Activated naive CD4-positive, alpha-beta T cell treated with anti-CD3 and anti-CD28 coated beads for 36 hours (primary cell): ENCODE measurements at regions of chr4 and their contacts with region 1.

Region 1: GRCh38 chr4:185471235-185472102 is at the start of gene CCDC110:
- DNase-seq: peak; percentile 93
- H3K4me3 Mint-ChIP-seq: peak within 1 kb of the TSS; percentile 84
- H3K27ac Mint-ChIP-seq: peak within 1 kb of the TSS; percentile 26
- H3K4me1 Mint-ChIP-seq: peaks cover 2% of the 10 kb centered on the region
- H3K27me3 Mint-ChIP-seq: peaks cover 4% of the 10 kb centered on the region
- total RNA-seq, gene CCDC110: 0.25 to 0.57 TPM

Region 2: DNA sequence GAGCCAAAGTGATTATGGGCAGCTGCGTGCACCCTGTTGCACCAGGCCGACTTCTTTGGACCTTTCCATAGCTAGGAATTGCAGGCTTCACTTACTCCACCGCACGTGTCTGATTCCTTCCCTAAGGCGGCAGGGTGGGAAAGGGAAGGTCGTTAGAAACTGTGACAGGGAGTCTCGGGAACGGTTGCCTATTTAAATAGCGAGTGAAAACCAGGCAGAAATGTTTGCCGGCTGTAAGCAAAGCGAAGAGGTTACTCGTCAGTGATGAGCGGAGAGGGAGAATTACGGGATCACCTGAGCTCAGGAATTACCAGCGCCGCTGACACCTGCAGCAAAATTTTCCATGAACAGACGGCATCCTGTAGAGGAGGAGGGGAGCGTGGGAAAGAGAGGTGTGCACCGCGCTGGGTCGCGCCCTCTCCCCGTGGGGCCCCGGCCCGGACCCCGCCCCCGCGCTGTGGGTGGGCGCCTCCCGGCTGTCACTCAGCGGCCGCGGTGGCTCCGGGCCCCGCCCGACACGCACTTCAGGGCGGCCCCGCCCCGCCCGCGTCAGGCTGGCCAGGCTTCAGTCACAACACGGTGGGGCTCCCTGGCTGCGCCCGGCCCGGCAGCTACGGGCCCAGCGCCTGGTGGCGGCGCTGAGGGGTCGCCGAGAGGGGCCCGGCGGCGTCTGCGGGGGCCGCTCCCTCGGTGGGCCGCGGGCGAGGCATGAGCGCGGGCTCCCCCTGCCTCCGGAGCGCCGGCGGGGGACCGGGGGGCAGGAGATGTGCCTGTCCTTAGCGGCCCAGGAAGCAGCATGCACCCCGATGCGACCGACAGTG is 262.2 kb before region 1 on chr4 and contains the start of gene SNX25:
- CTCF ChIA-PET with region 1: no interaction called
- intact Hi-C with region 1: loop called (anchors 1 kb)
- DNase-seq: peak; percentile 84
- H3K4me3 Mint-ChIP-seq: peak within 1 kb of the TSS; percentile 84
- H3K27ac Mint-ChIP-seq: peak within 1 kb of the TSS; percentile 71
- H3K4me1 Mint-ChIP-seq: peaks cover 28% of the 10 kb centered on the region
- H3K27me3 Mint-ChIP-seq: no peaks in the 10 kb centered on the region
- total RNA-seq, gene SNX25: 11.0 to 14.6 TPM

Region 3: GRCh38 chr4:185405296-185405999 is 66.0 kb before region 1 on chr4:
- CTCF ChIA-PET with region 1: no interaction called
- intact Hi-C with region 1: no loop called
- DNase-seq: no peak
- H3K4me3 Mint-ChIP-seq: no peak overlapping the region
- H3K27ac Mint-ChIP-seq: no peak overlapping the region
- H3K4me1 Mint-ChIP-seq: peaks cover 3% of the 10 kb centered on the region
- H3K27me3 Mint-ChIP-seq: no peaks in the 10 kb centered on the region

Region 4: DNA sequence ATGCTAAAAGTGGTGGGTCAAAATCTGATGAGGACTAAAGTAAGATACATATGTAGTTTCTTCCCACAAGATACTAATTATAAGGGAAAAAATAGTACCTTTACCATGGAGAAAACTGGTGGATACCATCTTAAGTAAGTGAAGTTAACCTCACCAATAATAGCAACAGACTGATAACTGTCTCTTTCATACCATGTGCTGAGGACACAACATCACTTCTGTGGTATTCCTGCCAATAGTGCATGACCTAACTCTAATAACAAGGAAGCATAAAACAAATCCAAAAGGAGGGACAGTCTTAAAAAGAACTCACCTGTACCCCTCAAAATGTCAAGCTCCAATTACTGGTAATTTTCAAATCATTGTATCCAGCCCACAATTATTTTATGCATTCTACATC is 54.5 kb before region 1 on chr4:
- CTCF ChIA-PET with region 1: no interaction called
- intact Hi-C with region 1: no loop called
- DNase-seq: no peak
- H3K4me3 Mint-ChIP-seq: no peak overlapping the region
- H3K27ac Mint-ChIP-seq: no peak overlapping the region
- H3K4me1 Mint-ChIP-seq: peaks cover 6% of the 10 kb centered on the region
- H3K27me3 Mint-ChIP-seq: no peaks in the 10 kb centered on the region

Region 5: GRCh38 chr4:185587427-185588161 is 116.1 kb after region 1 on chr4:
- CTCF ChIA-PET with region 1: no interaction called
- intact Hi-C with region 1: loop called (anchors 1 kb)
- DNase-seq: peak; percentile 91
- H3K4me3 Mint-ChIP-seq: peak overlapping the region; percentile 63
- H3K27ac Mint-ChIP-seq: peak overlapping the region; percentile 48
- H3K4me1 Mint-ChIP-seq: peaks cover 16% of the 10 kb centered on the region
- H3K27me3 Mint-ChIP-seq: peaks cover 43% of the 10 kb centered on the region

Region 6: DNA sequence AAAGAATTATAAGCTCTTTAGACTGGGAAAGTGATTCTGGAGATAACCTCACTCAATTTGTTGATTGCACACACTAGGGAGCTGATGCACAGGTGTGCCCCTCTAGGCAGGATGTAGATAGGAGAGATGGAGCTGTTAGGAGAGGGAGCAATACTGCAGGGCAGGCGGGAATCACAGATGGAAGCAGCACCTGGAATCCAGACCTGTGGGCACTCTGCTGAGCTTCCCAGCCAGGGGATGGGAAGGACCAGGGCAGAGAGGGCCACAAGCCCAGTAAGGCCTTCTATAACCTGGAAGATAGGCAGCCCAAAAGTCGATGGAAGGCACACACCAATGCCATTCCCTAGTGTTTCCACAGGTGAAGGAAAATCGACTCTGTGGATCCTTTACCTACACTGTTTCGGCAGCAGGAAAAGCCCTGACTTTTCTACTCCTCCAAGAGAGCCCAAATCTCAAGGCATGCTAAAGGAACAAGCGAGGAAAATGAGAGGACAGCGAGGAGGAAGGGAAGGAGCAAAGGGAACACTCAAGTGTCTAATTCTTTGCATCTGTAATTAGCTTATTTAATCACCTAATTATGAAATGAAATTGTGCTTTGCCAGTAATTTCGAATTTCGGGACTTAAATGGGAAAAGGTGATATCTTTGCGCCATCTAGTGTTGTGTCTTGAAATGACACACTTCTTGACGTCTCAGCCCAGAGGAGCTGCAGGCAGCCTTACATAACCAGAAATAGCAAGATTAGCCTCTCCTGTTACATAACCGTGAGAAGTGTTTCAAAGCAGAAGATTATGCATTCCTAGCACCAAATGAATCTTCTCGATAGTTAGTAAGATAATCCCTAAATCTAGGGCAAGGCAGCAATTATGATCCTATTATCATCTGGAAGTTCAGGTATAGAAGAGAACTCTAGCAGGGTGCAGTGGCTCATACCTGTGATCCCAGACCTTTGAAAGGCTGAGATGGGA is 566.5 kb after region 1 on chr4:
- CTCF ChIA-PET with region 1: no interaction called
- intact Hi-C with region 1: loop called (anchors 1 kb)
- DNase-seq: peak; percentile 51
- H3K4me3 Mint-ChIP-seq: no peak overlapping the region
- H3K27ac Mint-ChIP-seq: no peak overlapping the region
- H3K4me1 Mint-ChIP-seq: no peaks in the 10 kb centered on the region
- H3K27me3 Mint-ChIP-seq: peaks cover 31% of the 10 kb centered on the region